ENCODE measurements at regions of chr18 and their contacts with region 1.

Region 1: DNA sequence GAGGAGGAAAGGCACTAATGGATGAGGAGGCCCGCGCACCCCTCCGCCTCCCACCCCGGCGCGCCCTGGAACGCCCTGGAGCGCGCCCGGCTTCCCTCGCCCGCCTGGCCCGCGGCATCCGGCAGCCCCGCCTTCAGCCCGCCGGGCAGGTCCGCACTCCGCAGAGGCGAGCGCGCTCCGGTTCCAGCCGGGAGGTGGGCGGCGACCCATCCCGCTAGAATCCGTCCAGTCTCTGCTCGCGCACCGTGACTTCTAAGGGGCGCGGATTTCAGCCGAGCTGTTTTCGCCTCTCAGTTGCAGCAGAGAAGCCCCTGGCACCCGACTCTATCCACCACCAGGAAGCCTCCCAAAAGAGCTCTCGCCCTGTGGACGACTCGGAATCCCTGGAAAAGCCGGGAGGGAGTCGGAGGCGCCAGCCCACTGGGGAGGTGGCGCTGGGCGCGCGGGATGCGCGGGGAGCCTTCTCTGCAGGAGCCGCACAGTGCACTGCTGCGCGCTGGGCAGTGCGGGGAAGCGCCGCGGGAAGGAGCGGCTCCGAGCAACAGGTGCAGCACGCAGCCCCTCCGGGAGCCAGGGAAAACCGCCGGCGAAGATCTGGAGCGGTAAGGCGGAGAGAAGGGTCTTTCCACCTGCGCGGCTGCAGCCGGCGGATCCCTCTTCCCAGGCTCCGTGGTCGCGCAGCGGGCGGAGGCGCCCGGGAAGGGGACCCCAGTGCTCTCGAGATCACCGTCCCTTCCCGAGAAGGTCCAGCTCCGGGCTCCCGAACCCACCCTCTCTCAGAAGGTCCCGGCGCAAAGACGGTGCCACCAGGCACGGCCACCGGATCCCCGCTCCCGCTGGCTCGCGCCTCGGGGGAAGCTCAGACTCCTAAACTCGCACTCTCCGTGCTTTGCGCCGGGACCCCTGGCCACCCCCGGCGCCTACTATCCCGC is at the start of gene GALR1:
- DNase-seq: no peak
- H3K4me3 Mint-ChIP-seq: peak within 1 kb of the TSS; percentile 24
- H3K27ac Mint-ChIP-seq: no peak within 1 kb of the TSS
- H3K4me1 Mint-ChIP-seq: peaks cover 2% of the 10 kb centered on the region
- H3K27me3 Mint-ChIP-seq: peaks cover 59% of the 10 kb centered on the region
- total RNA-seq, gene GALR1: not detected in 2 replicates

Region 2: GRCh38 chr18:77101410-77102258 is 148.2 kb before region 1 on chr18:
- intact Hi-C with region 1: no loop called
- DNase-seq: no peak
- H3K4me3 Mint-ChIP-seq: peak overlapping the region; percentile 74
- H3K27ac Mint-ChIP-seq: peak overlapping the region; percentile 98
- H3K4me1 Mint-ChIP-seq: peaks cover 88% of the 10 kb centered on the region
- H3K27me3 Mint-ChIP-seq: no peaks in the 10 kb centered on the region

Region 3: DNA sequence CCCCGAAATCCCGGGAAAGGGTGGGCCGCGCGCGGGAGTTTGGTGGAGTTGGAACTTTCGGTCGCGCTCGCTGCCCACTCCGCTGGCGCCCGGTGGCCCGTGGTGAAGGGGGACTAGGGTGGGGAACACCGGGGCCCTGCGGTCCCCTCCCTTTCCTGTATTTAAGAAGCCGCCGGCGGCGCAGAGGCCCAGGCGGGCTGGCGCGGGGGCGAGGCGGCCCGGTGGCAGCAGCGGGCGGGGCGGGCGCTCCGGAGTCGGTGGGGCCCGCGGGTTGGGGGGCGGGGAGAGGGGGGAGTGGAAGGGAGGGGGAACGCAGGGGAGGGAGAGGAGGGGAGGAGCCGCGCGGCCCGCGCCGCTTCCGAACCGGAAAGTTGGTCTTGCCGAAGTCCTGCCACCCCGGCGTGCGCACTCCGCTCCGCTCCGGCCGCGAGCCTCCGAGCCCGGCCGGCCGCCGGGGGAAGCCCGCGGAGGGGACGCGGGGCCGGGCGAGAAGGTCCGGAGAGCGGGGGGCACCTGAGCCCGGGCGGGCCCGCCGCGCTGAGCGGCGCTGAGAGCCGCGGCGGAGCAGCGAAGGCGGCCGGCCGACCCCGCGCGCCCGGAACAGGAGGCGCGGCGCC is 1729.3 kb after region 1 on chr18:
- intact Hi-C with region 1: loop called (anchors 10 kb)
- DNase-seq: no peak
- H3K4me3 Mint-ChIP-seq: no peak overlapping the region
- H3K27ac Mint-ChIP-seq: no peak overlapping the region
- H3K4me1 Mint-ChIP-seq: peaks cover 10% of the 10 kb centered on the region
- H3K27me3 Mint-ChIP-seq: peaks cover 65% of the 10 kb centered on the region

Measured in activated T-helper 2 cell treated with anti-CD3 and anti-CD28 coated beads, Interferon-gamma antibody, Interleukin-2, Interleukin-4, amounts not matched to agents 10 μg/mL and 5 μg/mL and 100 μg/mL, durations not matched to agents 14 hours and 24 hours and 36 hours (primary cell).